B cell (primary cell): ENCODE measurements at regions of chr22 and their contacts with region 1.

Region 1: GRCh38 chr22:19361501-19362103 is 69.9 kb downstream of the HIRA start:
- DNase-seq: peak; percentile 92
- ATAC-seq: peak; percentile 95
- H3K4me3 ChIP-seq: peak overlapping the region; percentile 1 to 65 (median 47)
- H3K4me3 Mint-ChIP-seq: peak overlapping the region; percentile 85
- H3K27ac ChIP-seq: peak overlapping the region; percentile 98 to 100
- H3K27ac Mint-ChIP-seq: peak overlapping the region; percentile 95
- H3K4me1 ChIP-seq: peaks cover 64 to 75% of the 10 kb centered on the region in 2 donors
- H3K4me1 Mint-ChIP-seq: peaks cover 69% of the 10 kb centered on the region
- H3K27me3 ChIP-seq: no peaks in the 10 kb centered on the region
- H3K27me3 Mint-ChIP-seq: no peaks in the 10 kb centered on the region
- CTCF ChIP-seq: no peak

Region 2: GRCh38 chr22:19291580-19292457 is 69.8 kb before region 1 on chr22 and contains the start of gene CLTCL1:
- CTCF ChIA-PET with region 1: interaction called, 3 read pairs
- POLR2A ChIA-PET with region 1: interaction called, 9 read pairs
- intact Hi-C with region 1: loop called (anchors 1 kb)
- DNase-seq: peak; percentile 87
- ATAC-seq: peak; percentile 83
- H3K4me3 ChIP-seq: peak within 1 kb of the TSS; percentile 64 to 88 (median 84)
- H3K4me3 Mint-ChIP-seq: peak within 1 kb of the TSS; percentile 97
- H3K27ac ChIP-seq: peak within 1 kb of the TSS; percentile 75 to 77
- H3K27ac Mint-ChIP-seq: peak within 1 kb of the TSS; percentile 94
- H3K4me1 ChIP-seq: peaks cover 15 to 17% of the 10 kb centered on the region in 2 donors
- H3K4me1 Mint-ChIP-seq: peaks cover 24% of the 10 kb centered on the region
- H3K27me3 ChIP-seq: peaks cover 0 to 13% (median 3%) of the 10 kb centered on the region in 4 experiments
- H3K27me3 Mint-ChIP-seq: peaks cover 18% of the 10 kb centered on the region
- CTCF ChIP-seq: no peak
- total RNA-seq, gene CLTCL1: 5.2 and 5.5 TPM in 2 replicates

Region 3: DNA sequence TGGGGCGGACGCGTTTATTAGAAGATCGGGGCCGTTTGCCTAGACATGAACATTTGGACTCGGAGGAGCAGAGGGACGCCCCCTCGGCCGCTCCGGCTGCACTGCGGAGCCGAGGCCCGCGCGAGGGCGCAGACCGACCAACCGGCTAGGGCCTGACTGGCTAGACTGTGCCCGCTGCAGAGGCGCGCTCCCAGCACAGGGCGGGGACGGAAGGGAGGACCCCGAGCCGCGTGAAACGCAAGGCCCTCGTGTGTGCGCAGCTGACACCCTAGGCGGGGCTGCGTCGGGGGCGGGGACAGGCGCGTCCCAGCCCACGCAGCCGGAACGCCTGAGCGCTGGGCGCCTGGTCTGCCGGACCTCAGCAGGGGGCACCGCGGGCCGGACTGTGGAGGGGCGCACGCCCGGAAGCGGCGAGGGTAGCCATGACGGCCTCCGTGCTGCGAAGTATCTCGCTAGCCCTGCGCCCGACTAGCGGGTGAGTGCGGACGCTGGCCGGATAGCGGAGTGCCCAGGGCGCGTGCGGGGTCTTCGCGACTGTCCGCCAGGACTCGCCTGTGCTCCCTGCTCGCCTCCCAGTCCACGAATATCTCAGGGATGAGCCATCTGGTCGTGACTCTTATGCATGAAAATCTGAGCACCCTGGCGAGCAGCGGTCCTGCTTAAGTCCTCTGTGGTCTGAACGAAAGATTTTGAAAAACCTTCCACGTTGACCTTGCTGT is 70.7 kb after region 1 on chr22 and contains the start of gene MRPL40:
- CTCF ChIA-PET with region 1: interaction called, 3 read pairs
- POLR2A ChIA-PET with region 1: interaction called, 7 read pairs
- intact Hi-C with region 1: loop called (anchors 1 kb)
- DNase-seq: peak; percentile 90
- ATAC-seq: peak; percentile 87
- H3K4me3 ChIP-seq: peak within 1 kb of the TSS; percentile 73 to 90 (median 85)
- H3K4me3 Mint-ChIP-seq: peak within 1 kb of the TSS; percentile 93
- H3K27ac ChIP-seq: peak within 1 kb of the TSS; percentile 91 to 97
- H3K27ac Mint-ChIP-seq: peak within 1 kb of the TSS; percentile 98
- H3K4me1 ChIP-seq: peaks cover 46 to 63% of the 10 kb centered on the region in 2 donors
- H3K4me1 Mint-ChIP-seq: peaks cover 62% of the 10 kb centered on the region
- H3K27me3 ChIP-seq: no peaks in the 10 kb centered on the region
- H3K27me3 Mint-ChIP-seq: no peaks in the 10 kb centered on the region
- CTCF ChIP-seq: no peak
- total RNA-seq, gene MRPL40: 18.0 and 21.9 TPM in 2 replicates

Region 4: DNA sequence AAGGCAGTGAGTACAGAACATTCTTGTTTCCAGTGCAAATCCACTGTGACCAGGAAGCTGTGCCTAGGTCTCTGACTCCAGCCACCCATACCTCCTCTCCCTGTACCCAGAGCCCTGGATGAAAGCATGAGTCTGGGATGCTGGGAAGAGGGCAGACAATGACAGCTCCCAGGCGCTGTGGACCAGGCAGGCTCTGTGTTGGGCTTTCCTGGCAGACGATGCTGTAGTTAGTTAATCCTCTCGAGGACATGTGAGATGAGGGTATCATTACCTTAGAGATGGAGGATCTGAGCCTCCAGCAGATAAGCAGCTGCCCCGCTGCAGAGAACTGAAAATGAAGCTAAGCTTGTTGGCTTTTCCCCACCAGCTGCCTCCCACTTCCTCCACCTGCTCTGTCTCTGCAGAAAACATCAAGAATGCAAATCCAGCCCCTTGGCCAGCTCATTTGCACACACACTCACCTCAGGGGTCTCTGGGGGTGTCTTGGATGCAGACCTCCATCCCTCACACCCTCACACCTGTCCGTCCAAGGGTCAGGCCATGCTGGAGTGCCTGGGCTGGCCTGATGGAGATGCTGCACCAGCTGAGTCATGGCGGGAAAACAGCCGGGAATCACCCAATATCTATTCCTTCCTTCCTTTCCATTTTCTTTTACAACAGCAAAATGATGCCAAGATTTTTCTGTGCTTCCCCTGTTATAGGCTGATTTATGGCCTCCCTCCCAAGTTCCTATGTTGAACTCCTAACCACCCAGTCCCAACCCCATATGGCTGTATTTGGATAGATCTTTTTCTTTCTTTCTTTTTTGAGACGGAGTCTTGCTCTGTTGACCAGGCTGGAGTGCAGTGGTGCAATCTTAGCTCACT is 257.8 kb after region 1 on chr22:
- CTCF ChIA-PET with region 1: no interaction called
- POLR2A ChIA-PET with region 1: no interaction called
- intact Hi-C with region 1: loop called (anchors 5 kb)
- DNase-seq: peak; percentile 59
- ATAC-seq: peak; percentile 31
- H3K4me3 ChIP-seq: peak overlapping the region in 1 of 5 experiments; percentile 23
- H3K4me3 Mint-ChIP-seq: peak overlapping the region; percentile 57
- H3K27ac ChIP-seq: no peak overlapping the region
- H3K27ac Mint-ChIP-seq: peak overlapping the region; percentile 28
- H3K4me1 ChIP-seq: peaks cover 35 to 59% of the 10 kb centered on the region in 2 donors
- H3K4me1 Mint-ChIP-seq: peaks cover 52% of the 10 kb centered on the region
- H3K27me3 ChIP-seq: peaks cover 0 to 22% (median 5%) of the 10 kb centered on the region in 4 experiments
- H3K27me3 Mint-ChIP-seq: peaks cover 30% of the 10 kb centered on the region
- CTCF ChIP-seq: no peak